CD4-positive, alpha-beta T cell (primary cell): ENCODE measurements at regions of chr16 and their contacts with region 1.

Region 1: GRCh38 chr16:84511180-84511824 is 6.8 kb upstream of the MEAK7 start:
- DNase-seq: peak; percentile 77 to 95 (median 85)
- ATAC-seq: peak; percentile 17
- H3K4me3 ChIP-seq: no peak overlapping the region
- H3K4me3 Mint-ChIP-seq: peak overlapping the region; percentile 69
- H3K27ac ChIP-seq: no peak overlapping the region
- H3K27ac Mint-ChIP-seq: peak overlapping the region; percentile 80
- H3K4me1 ChIP-seq: peaks cover 91% of the 10 kb centered on the region
- H3K4me1 Mint-ChIP-seq: peaks cover 71% of the 10 kb centered on the region
- H3K27me3 ChIP-seq: no peaks in the 10 kb centered on the region
- H3K27me3 Mint-ChIP-seq: no peaks in the 10 kb centered on the region
- CTCF ChIP-seq: peak; percentile 93

Region 2: DNA sequence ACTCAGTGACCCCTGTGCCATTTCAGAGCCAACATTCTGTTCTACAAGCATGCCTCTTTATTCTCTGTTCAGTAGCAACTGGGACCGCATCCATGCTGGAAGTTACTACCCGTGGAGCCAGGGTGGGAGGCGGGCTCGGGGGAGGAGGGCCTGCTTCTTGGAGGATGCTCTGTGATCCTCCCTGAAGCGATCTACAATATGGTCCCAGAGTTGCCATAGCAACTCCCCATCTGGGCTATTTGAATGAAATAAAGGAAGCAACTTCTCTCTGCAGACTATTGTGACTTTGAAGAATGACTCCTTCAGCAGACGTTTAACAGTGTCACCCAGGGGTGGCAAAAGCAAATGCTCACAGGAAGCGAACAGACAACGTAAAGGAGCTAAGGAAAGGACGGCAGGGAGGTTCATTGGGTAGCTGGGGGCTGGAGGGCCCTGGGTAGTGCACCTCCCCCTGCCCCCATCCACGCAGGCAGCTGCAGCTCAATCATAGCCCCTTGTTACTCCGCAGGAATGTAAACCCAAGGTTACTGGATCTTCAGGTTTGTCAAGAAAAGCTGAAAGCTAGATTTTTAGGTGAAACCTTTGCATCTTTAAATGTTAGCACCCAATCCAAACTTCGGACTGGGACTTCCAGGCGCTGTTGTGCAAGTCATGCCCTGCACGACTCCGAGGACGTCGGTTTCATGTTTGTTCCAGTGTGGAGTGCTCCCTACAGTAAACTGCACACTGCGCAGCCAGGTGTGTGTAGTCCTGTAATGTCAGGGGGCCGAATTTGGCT is 44.3 kb after region 1 on chr16:
- CTCF ChIA-PET with region 1: interaction called, 4 read pairs
- POLR2A ChIA-PET with region 1: no interaction called
- intact Hi-C with region 1: loop called (anchors 5 to 10 kb)
- DNase-seq: peak in 2 of 14 experiments; percentile 30 to 41
- ATAC-seq: peak; percentile 63
- H3K4me3 ChIP-seq: no peak overlapping the region
- H3K4me3 Mint-ChIP-seq: no peak overlapping the region
- H3K27ac ChIP-seq: no peak overlapping the region
- H3K27ac Mint-ChIP-seq: no peak overlapping the region
- H3K4me1 ChIP-seq: peaks cover 28% of the 10 kb centered on the region
- H3K4me1 Mint-ChIP-seq: peaks cover 7% of the 10 kb centered on the region
- H3K27me3 ChIP-seq: no peaks in the 10 kb centered on the region
- H3K27me3 Mint-ChIP-seq: no peaks in the 10 kb centered on the region
- CTCF ChIP-seq: no peak

Region 3: GRCh38 chr16:84562174-84562815 is 51.0 kb after region 1 on chr16:
- CTCF ChIA-PET with region 1: interaction called, 3 read pairs
- POLR2A ChIA-PET with region 1: interaction called, 3 read pairs
- intact Hi-C with region 1: loop called (anchors 5 to 10 kb)
- DNase-seq: peak in 2 of 14 experiments; percentile 43 to 47
- ATAC-seq: no peak
- H3K4me3 ChIP-seq: no peak overlapping the region
- H3K4me3 Mint-ChIP-seq: no peak overlapping the region
- H3K27ac ChIP-seq: no peak overlapping the region
- H3K27ac Mint-ChIP-seq: no peak overlapping the region
- H3K4me1 ChIP-seq: peaks cover 2% of the 10 kb centered on the region
- H3K4me1 Mint-ChIP-seq: no peaks in the 10 kb centered on the region
- H3K27me3 ChIP-seq: no peaks in the 10 kb centered on the region
- H3K27me3 Mint-ChIP-seq: no peaks in the 10 kb centered on the region
- CTCF ChIP-seq: no peak

Region 4: DNA sequence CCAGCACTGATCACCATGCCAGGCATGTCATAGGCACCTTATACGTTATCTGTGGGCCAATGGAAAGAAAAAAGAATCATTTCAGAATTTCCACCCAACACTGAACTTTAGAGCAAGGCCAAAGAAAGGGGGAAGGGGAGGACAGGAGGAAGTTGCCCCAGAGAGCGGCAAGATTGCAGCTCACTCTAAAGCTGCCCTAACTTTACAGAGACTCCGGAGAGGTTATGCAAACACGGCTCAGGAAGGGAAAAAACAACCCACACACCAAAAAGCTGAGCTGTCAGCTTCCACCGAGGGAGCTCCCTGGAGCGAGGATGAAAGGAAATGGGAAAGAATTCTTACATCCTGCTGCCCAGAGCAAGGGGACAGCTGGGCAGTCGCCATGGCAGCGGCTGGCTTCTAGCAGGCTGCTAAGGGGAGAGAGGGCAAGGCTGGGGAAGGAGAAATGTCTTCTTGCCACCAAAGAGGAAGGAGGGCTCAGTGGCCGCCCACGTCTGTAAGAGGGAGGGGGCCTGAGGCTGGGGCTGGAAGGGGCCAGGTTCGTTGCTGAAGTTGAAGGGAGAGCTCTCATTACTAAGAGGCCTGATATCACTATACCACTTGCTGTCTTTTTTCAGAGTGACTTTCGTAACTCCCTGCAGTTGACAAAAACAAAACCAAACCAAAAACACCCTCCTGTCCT is 88.4 kb after region 1 on chr16:
- CTCF ChIA-PET with region 1: interaction called, 6 read pairs
- POLR2A ChIA-PET with region 1: interaction called, 15 read pairs
- intact Hi-C with region 1: no loop called
- DNase-seq: peak in 7 of 14 experiments; percentile 35 to 73 (median 58)
- ATAC-seq: peak; percentile 24
- H3K4me3 ChIP-seq: peak overlapping the region; percentile 46
- H3K4me3 Mint-ChIP-seq: peak overlapping the region; percentile 86
- H3K27ac ChIP-seq: peak overlapping the region; percentile 82 to 85
- H3K27ac Mint-ChIP-seq: peak overlapping the region; percentile 96
- H3K4me1 ChIP-seq: peaks cover 95% of the 10 kb centered on the region
- H3K4me1 Mint-ChIP-seq: peaks cover 80% of the 10 kb centered on the region
- H3K27me3 ChIP-seq: no peaks in the 10 kb centered on the region
- H3K27me3 Mint-ChIP-seq: no peaks in the 10 kb centered on the region
- CTCF ChIP-seq: no peak

Region 5: DNA sequence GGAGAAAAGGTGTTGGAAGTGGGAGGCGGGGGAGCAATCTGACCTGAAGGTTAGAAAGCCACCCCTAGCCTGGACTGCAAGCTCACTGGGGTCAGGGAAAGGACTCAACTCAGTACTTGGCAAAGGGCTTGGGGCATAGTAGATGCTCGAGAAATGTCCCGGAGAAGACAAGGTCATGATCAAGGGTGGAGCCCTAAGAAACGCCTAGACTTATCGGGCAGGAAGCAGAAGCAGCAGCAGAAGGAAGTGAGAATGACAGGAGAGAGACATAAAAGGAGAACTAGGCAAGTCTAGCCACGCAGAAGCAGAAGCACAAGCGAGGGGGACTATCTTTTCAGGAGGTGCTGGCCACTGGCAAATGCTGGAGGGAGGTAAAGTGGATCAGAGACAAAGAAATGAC is 96.4 kb after region 1 on chr16:
- CTCF ChIA-PET with region 1: interaction called, 3 read pairs
- POLR2A ChIA-PET with region 1: interaction called, 10 read pairs
- intact Hi-C with region 1: no loop called
- DNase-seq: peak in 4 of 14 experiments; percentile 53 to 74 (median 70)
- ATAC-seq: peak; percentile 60
- H3K4me3 ChIP-seq: peak overlapping the region; percentile 22
- H3K4me3 Mint-ChIP-seq: peak overlapping the region; percentile 47
- H3K27ac ChIP-seq: peak overlapping the region; percentile 51 to 63
- H3K27ac Mint-ChIP-seq: peak overlapping the region; percentile 88
- H3K4me1 ChIP-seq: peaks cover 97% of the 10 kb centered on the region
- H3K4me1 Mint-ChIP-seq: peaks cover 90% of the 10 kb centered on the region
- H3K27me3 ChIP-seq: no peaks in the 10 kb centered on the region
- H3K27me3 Mint-ChIP-seq: no peaks in the 10 kb centered on the region
- CTCF ChIP-seq: no peak

Region 6: DNA sequence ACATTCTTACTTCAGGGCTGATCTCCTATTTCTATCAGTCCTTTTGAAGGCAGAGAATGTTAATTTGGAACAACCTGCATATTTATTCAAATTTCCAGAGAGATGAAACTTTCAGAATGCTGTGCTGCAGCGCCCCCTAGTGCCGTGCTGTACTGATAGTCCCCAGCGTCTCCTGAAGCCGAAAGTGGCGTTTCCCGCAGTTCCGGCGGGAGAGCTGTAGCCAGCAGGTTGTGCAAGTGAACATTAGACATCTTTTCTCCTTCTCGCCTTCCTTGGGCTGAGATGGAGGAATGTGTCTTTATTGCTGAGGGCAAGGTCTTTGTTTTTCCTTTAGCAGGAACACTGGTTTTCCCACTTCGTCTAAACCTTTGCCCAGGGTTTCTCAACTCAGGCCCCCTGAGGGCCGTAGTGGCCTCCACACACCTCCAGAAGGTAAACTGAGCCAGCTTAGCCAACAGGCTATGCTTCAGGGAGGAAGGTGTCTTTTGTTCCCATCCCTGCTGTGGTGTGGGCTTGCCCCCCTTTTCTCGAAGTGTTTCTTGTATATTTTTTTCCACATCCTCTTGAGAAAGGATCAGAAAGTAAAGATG is 214.9 kb after region 1 on chr16:
- CTCF ChIA-PET with region 1: interaction called, 6 read pairs
- POLR2A ChIA-PET with region 1: interaction called, 3 read pairs
- intact Hi-C with region 1: loop called (anchors 1 to 2 kb)
- DNase-seq: peak; percentile 76 to 93 (median 84)
- ATAC-seq: peak; percentile 76
- H3K4me3 ChIP-seq: no peak overlapping the region
- H3K4me3 Mint-ChIP-seq: peak overlapping the region; percentile 39
- H3K27ac ChIP-seq: no peak overlapping the region
- H3K27ac Mint-ChIP-seq: no peak overlapping the region
- H3K4me1 ChIP-seq: peaks cover 17% of the 10 kb centered on the region
- H3K4me1 Mint-ChIP-seq: peaks cover 81% of the 10 kb centered on the region
- H3K27me3 ChIP-seq: no peaks in the 10 kb centered on the region
- H3K27me3 Mint-ChIP-seq: no peaks in the 10 kb centered on the region
- CTCF ChIP-seq: peak; percentile 99